A673 (cell line): ENCODE measurements at regions of chr15 and their contacts with region 1.

Region 1: DNA sequence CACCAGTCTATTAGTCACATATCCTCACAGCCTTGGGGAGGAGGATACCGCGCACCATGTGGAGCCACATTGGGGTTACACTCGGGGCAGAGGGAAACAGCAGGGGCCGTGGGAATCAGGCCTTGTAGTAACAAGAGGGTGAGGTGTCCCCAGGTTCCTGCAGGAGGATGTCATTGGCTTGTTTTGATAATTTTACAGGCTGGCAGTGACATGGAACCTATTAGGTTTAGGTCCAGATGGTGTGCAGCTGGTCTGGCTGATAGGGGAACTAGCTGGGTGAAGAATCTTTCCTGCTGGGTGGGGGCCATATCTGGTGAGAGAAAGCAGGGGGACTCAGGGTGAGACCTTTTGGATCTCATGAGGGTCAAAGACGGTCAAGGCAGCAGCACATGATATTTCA is 9.8 kb upstream of the MEF2A start:
- DNase-seq: no peak
- H3K4me3 ChIP-seq: no peak overlapping the region
- H3K27ac ChIP-seq: no peak overlapping the region
- H3K4me1 ChIP-seq: no peaks in the 10 kb centered on the region
- H3K27me3 ChIP-seq: no peaks in the 10 kb centered on the region
- CTCF ChIP-seq: no peak

Region 2: GRCh38 chr15:99409097-99409473 is 146.9 kb before region 1 on chr15:
- CTCF ChIA-PET with region 1: no interaction called
- POLR2A ChIA-PET with region 1: no interaction called
- intact Hi-C with region 1: no loop called
- DNase-seq: peak; percentile 33
- H3K4me3 ChIP-seq: no peak overlapping the region
- H3K27ac ChIP-seq: no peak overlapping the region
- H3K4me1 ChIP-seq: peaks cover 34% of the 10 kb centered on the region
- H3K27me3 ChIP-seq: no peaks in the 10 kb centered on the region
- CTCF ChIP-seq: peak; percentile 43

Region 3: GRCh38 chr15:99542828-99543227 is 13.2 kb before region 1 on chr15:
- CTCF ChIA-PET with region 1: no interaction called
- POLR2A ChIA-PET with region 1: no interaction called
- intact Hi-C with region 1: loop called (anchors 1 kb)
- DNase-seq: no peak
- H3K4me3 ChIP-seq: no peak overlapping the region
- H3K27ac ChIP-seq: no peak overlapping the region
- H3K4me1 ChIP-seq: no peaks in the 10 kb centered on the region
- H3K27me3 ChIP-seq: no peaks in the 10 kb centered on the region
- CTCF ChIP-seq: no peak

Region 4: DNA sequence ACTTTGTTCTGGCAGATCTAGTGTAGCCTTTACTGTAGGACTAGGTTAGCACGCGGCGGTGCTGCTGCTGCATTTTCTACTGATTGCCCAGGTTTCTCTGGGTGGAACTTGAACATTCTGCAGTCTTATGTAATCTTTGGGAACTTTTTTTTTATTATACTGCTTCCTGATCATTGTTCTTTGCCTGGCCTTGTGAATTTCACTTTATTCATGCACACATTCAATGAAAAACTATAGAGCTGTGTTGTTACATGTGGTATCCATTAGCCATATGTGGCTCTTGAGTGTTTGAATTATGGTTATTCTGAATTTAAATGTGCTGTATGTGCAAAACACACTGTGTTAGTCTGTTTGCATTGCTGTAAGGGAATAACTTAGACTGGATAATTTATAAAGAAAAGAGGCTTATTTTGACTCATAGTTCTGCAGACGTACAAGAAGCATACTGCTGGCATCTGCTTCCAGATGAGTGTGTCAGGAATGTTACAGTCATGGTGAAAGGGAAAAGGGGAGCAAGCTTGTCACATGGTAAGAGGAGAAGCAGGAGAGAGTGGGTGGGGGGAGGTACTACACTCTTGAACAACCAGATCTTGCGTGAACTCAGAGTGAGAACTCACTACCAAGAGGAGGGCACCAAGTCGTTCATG is 36.3 kb after region 1 on chr15:
- CTCF ChIA-PET with region 1: no interaction called
- POLR2A ChIA-PET with region 1: no interaction called
- intact Hi-C with region 1: no loop called
- DNase-seq: peak; percentile 55
- H3K4me3 ChIP-seq: no peak overlapping the region
- H3K27ac ChIP-seq: peak overlapping the region; percentile 34
- H3K4me1 ChIP-seq: peaks cover 5% of the 10 kb centered on the region
- H3K27me3 ChIP-seq: no peaks in the 10 kb centered on the region
- CTCF ChIP-seq: no peak